Activated CD8-positive, alpha-beta T cell treated with anti-CD3 and anti-CD28 coated beads, Interleukin-2, amount 10 ng/mL, durations not matched to agents 7 days and 5 days (primary cell): ENCODE measurements at regions of chr19 and their contacts with region 1.

Region 1: GRCh38 chr19:12847159-12848139 is 9.1 kb downstream of the MAST1 start:
- DNase-seq: peak; percentile 86
- ATAC-seq: peak; percentile 98
- H3K4me3 Mint-ChIP-seq: peak overlapping the region; percentile 34
- H3K27ac Mint-ChIP-seq: no peak overlapping the region
- H3K4me1 Mint-ChIP-seq: peaks cover 8% of the 10 kb centered on the region
- H3K27me3 Mint-ChIP-seq: peaks cover 19% of the 10 kb centered on the region

Region 2: GRCh38 chr19:12628040-12629022 is 219.1 kb before region 1 on chr19:
- CTCF ChIA-PET with region 1: no interaction called
- POLR2A ChIA-PET with region 1: no interaction called
- DNase-seq: no peak
- ATAC-seq: no peak
- H3K4me3 Mint-ChIP-seq: no peak overlapping the region
- H3K27ac Mint-ChIP-seq: no peak overlapping the region
- H3K4me1 Mint-ChIP-seq: no peaks in the 10 kb centered on the region
- H3K27me3 Mint-ChIP-seq: no peaks in the 10 kb centered on the region

Region 3: GRCh38 chr19:12757544-12758274 is 89.7 kb before region 1 on chr19:
- CTCF ChIA-PET with region 1: interaction called, 75 read pairs
- POLR2A ChIA-PET with region 1: no interaction called
- DNase-seq: peak; percentile 72
- ATAC-seq: peak; percentile 83
- H3K4me3 Mint-ChIP-seq: peak overlapping the region; percentile 31
- H3K27ac Mint-ChIP-seq: no peak overlapping the region
- H3K4me1 Mint-ChIP-seq: peaks cover 11% of the 10 kb centered on the region
- H3K27me3 Mint-ChIP-seq: peaks cover 5% of the 10 kb centered on the region

Region 4: GRCh38 chr19:12777217-12778016 is 70.0 kb before region 1 on chr19:
- CTCF ChIA-PET with region 1: interaction called, 26 read pairs
- POLR2A ChIA-PET with region 1: no interaction called
- DNase-seq: peak; percentile 85
- ATAC-seq: peak; percentile 48
- H3K4me3 Mint-ChIP-seq: peak overlapping the region; percentile 72
- H3K27ac Mint-ChIP-seq: peak overlapping the region; percentile 85
- H3K4me1 Mint-ChIP-seq: peaks cover 48% of the 10 kb centered on the region
- H3K27me3 Mint-ChIP-seq: no peaks in the 10 kb centered on the region

Region 5: DNA sequence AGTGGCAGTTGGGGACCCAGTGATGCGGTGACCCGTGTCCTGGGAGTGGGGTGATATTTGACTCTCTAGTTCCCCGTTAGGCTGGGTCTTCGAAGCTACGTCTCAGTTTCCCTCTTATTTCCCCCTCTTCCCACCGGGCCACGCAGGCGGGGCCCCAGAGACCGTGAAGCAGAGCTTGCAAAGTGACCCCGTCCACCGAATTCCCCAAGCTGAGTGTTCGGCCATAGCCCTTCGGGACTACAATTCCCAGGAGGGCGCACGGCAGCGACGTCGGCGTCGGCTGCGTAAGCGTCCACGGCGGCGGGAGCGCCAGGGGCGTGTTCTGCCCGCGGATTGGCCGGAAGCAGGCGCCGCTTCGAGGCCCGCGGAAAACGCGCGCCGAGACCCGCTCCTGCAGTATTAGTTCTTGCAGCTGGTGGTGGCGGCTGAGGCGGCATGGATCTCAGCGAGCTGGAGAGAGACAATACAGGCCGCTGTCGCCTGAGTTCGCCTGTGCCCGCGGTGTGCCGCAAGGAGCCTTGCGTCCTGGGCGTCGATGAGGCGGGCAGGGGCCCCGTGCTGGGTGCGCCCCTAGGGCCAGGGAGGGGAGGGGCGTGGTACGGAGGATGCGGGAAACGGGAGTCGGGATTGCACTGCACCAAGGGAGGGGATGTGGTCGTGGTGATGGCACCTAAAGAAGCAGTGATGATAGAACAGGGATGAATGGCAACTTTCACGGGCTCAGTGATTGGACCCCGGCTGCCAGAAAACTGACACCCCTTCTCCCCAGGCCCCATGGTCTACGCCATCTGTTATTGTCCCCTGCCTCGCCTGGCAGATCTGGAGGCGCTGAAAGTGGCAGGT is 41.0 kb before region 1 on chr19 and contains the start of gene RNASEH2A:
- CTCF ChIA-PET with region 1: interaction called, 12 read pairs
- POLR2A ChIA-PET with region 1: no interaction called
- DNase-seq: peak; percentile 92
- ATAC-seq: peak; percentile 89
- H3K4me3 Mint-ChIP-seq: peak within 1 kb of the TSS; percentile 97
- H3K27ac Mint-ChIP-seq: peak within 1 kb of the TSS; percentile 95
- H3K4me1 Mint-ChIP-seq: peaks cover 28% of the 10 kb centered on the region
- H3K27me3 Mint-ChIP-seq: no peaks in the 10 kb centered on the region
- total RNA-seq, gene RNASEH2A: 49.2 to 64.0 TPM

Region 6: DNA sequence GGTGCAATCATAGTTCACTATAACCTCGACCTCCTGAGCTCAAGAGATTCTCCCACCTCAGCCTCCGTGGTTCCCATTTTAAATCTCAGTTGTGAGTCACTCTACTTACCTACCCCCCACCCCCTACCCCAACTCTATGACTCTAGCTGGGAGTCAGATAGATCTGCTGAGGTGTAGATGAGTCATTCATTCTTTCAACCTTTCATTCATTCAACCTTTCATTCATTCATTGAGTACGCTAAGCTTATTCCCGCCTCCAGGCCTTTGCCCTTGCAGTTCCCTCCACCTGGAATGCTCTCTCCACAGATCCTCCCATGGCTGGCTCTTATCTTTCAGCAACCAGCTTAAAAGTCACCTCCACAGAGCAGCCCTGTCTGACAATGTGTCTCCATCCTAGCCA is 10.2 kb before region 1 on chr19:
- CTCF ChIA-PET with region 1: interaction called, 15 read pairs
- POLR2A ChIA-PET with region 1: no interaction called
- DNase-seq: no peak
- ATAC-seq: no peak
- H3K4me3 Mint-ChIP-seq: no peak overlapping the region
- H3K27ac Mint-ChIP-seq: no peak overlapping the region
- H3K4me1 Mint-ChIP-seq: peaks cover 34% of the 10 kb centered on the region
- H3K27me3 Mint-ChIP-seq: peaks cover 75% of the 10 kb centered on the region

Region 7: GRCh38 chr19:12907166-12907565 is 59.7 kb after region 1 on chr19:
- CTCF ChIA-PET with region 1: no interaction called
- POLR2A ChIA-PET with region 1: no interaction called
- DNase-seq: no peak
- ATAC-seq: no peak
- H3K4me3 Mint-ChIP-seq: no peak overlapping the region
- H3K27ac Mint-ChIP-seq: peak overlapping the region; percentile 55
- H3K4me1 Mint-ChIP-seq: peaks cover 4% of the 10 kb centered on the region
- H3K27me3 Mint-ChIP-seq: no peaks in the 10 kb centered on the region